Posterior vena cava (tissue), 2 donors: ENCODE measurements at regions of chrX and their contacts with region 1.

Region 1: DNA sequence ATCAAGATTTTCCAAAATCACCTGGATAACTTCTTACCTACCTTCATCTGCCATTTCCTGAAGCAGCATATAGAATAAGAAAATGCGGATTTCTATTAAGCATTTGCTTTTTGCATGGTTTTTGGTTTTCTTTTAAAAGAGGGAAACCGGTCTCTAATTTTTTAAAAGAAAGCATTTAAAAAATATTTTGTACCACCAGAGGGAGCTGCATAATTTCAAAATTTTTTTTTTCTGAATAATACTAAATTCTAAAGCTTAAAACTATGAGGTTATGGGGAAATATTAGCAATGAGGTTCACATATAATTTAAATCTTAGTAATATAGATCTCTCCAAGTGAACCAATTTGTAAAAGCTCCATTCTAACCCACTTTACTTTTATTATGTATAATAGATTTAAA is 137.7 kb upstream of the TENT5D start:
- DNase-seq: no peak

Region 2: GRCh38 chrX:80578517-80579105 is 296.1 kb after region 1 on chrX:
- intact Hi-C with region 1: loop called in 1 of 2 experiments (anchors 5 kb)
- DNase-seq: no peak